Spleen (tissue), 13 donors: ENCODE measurements at regions of chr16 and their contacts with region 1.

Region 1: GRCh38 chr16:50210266-50211038 is 55.9 kb upstream of the ADCY7 start:
- DNase-seq: peak; percentile 82
- H3K4me3 ChIP-seq: no peak overlapping the region
- H3K27ac ChIP-seq: peak overlapping the region in 4 of 8 donors; percentile 27 to 63 (median 42)
- H3K4me1 ChIP-seq: peaks cover 13 to 63% (median 40%) of the 10 kb centered on the region in 6 donors
- H3K27me3 ChIP-seq: no peaks in the 10 kb centered on the region
- CTCF ChIP-seq: peak; percentile 25 to 79 (median 62)
- POLR2A ChIP-seq: no peak

Region 2: GRCh38 chr16:50024684-50025536 is 185.5 kb before region 1 on chr16 and contains the start of gene CNEP1R1:
- intact Hi-C with region 1: loop called (anchors 5 kb)
- DNase-seq: peak; percentile 98
- H3K4me3 ChIP-seq: peak within 1 kb of the TSS; percentile 72 to 98 (median 96)
- H3K27ac ChIP-seq: peak within 1 kb of the TSS; percentile 50 to 95 (median 90)
- H3K4me1 ChIP-seq: peaks cover 17 to 52% (median 36%) of the 10 kb centered on the region in 6 donors
- H3K27me3 ChIP-seq: peaks cover 0 to 6% (median 0%) of the 10 kb centered on the region in 7 donors
- CTCF ChIP-seq: peak; percentile 96 to 100 (median 99)
- POLR2A ChIP-seq: no peak
- total RNA-seq, gene CNEP1R1: 22.6 to 45.4 (median 32.9) TPM

Region 3: DNA sequence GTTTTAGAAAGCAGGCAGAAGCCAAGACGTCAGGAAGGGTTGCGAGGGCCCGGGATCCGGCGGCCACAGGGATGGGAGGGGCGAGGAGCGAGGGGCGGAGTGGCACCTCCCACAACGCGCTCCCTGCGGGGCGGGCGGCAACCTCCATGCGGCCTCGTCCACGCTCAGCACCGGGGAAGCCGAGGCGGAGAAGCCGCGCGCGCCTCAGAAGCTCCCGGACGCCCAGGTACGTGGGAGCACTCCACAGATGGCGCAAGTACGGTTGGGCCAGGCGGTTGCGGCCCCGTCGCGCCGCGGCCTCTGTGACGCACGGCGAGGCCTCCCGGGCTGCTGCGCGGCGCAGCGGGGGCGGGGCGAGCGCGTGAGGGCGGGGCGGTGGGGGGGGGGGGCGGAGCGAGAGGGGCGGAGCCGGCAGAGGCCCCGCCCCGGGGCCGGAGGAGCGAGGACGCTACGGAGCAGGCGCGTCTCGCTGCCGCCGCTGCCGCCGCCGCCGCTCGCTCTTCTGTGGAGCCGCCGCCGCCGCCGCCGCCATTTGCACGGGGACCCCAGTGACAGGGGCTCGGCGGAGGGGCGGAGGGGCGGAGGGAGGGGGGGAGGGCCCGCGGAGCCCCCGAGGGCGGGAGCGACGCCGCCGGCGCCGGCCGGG is 57.5 kb before region 1 on chr16 and contains the start of gene TENT4B:
- intact Hi-C with region 1: loop called (anchors 5 kb)
- DNase-seq: peak; percentile 98
- H3K4me3 ChIP-seq: peak within 1 kb of the TSS; percentile 70 to 93 (median 83)
- H3K27ac ChIP-seq: peak within 1 kb of the TSS; percentile 95 to 99 (median 98)
- H3K4me1 ChIP-seq: peaks cover 22 to 53% (median 44%) of the 10 kb centered on the region in 6 donors
- H3K27me3 ChIP-seq: no peaks in the 10 kb centered on the region
- CTCF ChIP-seq: peak in 2 of 11 experiments; percentile 12 to 38
- POLR2A ChIP-seq: peak in 1 of 3 donors; percentile 58
- total RNA-seq, gene TENT4B: 11.3 to 16.4 (median 13.0) TPM

Region 4: DNA sequence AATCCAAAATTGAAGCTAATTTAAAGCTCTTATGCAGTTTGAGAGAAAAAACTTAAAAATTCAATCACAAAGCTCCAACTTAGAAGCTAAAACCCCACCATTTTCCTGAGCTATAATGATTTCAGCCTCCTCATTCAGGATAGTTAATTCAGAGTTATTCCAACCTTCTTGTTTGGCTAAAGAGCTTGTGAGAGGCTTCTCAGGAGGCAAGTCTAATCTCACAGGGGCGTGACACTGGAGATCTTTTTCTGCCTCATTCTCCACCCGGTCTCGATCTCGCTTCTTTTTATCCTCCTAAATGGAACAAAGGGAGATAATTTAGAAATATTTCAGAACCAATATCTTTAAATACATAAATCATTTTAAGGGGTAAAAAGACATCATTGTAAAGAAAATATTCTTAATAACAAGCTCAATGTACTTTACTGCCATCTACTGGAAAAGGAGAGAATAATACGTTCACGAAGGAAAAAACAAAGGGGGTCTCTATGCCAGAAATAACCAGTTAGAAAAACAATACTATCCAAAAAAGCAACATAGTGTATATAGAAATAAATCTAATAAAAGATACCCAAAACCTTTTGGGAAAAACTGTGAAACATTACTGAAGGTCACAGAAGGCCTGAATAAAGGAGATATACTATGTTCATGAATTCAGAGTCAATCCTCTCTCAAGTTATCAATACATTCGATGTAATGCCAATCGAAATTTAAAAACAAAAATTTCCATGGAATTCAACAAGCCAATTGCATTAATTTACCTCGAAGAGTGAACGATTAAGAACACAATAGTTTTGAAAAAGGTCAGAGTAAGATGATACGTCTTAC is 144.4 kb after region 1 on chr16:
- intact Hi-C with region 1: loop called (anchors 2 kb)
- DNase-seq: no peak
- H3K4me3 ChIP-seq: no peak overlapping the region
- H3K27ac ChIP-seq: no peak overlapping the region
- H3K4me1 ChIP-seq: peaks cover 0 to 23% (median 5%) of the 10 kb centered on the region in 6 donors
- H3K27me3 ChIP-seq: no peaks in the 10 kb centered on the region
- CTCF ChIP-seq: peak; percentile 28 to 71 (median 62)
- POLR2A ChIP-seq: no peak